Breast epithelium (tissue), 4 donors: ENCODE measurements at regions of chr16 and their contacts with region 1.

Region 1: GRCh38 chr16:24132797-24133155 is 123.4 kb upstream of the CACNG3 start:
- DNase-seq: no peak
- H3K4me3 ChIP-seq: no peak overlapping the region
- H3K27ac ChIP-seq: no peak overlapping the region
- H3K4me1 ChIP-seq: no peaks in the 10 kb centered on the region
- H3K27me3 ChIP-seq: no peaks in the 10 kb centered on the region
- CTCF ChIP-seq: no peak
- POLR2A ChIP-seq: no peak

Region 2: DNA sequence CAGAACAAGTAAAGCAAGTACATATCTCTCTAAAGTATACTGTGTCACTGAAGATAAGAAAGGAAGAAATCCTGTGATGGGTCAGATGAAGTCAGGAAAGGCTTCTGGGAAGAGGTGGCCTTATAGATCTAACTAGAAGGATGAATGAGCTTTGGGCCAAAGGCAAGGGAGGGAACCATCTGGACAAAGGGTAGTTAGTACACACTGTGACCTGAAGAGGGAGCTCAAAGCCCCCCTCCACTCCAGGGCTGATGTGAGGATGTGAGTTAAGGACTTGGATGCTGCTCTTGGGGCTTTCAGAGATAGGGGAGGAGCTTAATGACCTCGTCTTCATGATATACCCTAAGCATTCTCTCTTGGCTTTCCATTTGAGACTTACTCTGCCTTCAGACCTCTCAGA is 61.9 kb before region 1 on chr16:
- intact Hi-C with region 1: no loop called
- DNase-seq: no peak
- H3K4me3 ChIP-seq: no peak overlapping the region
- H3K27ac ChIP-seq: no peak overlapping the region
- H3K4me1 ChIP-seq: no peaks in the 10 kb centered on the region
- H3K27me3 ChIP-seq: no peaks in the 10 kb centered on the region
- CTCF ChIP-seq: no peak
- POLR2A ChIP-seq: no peak

Region 3: DNA sequence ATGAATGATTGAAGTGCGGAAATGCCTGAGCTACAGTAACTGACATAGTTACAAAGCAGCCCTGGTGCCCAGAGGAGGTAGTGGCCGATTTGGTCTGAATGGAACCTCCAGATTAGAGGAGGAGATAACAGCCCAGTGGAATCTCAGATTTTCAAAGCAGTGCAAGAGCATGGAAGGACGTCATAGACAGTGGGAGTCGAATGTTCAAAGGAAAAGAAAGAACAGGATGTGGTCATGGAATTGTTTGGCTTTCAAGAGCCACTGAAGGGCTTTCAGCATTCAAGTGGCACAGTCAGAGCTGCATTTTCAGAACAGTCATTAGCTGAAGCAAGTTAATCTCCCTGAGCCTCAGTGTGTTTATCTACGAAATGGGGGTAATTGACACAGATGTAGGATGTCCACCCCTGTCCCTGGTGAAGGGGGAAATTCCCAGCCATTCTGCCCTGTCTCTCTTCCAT is 18.7 kb after region 1 on chr16:
- intact Hi-C with region 1: loop called (anchors 1 kb)
- DNase-seq: no peak
- H3K4me3 ChIP-seq: no peak overlapping the region
- H3K27ac ChIP-seq: no peak overlapping the region
- H3K4me1 ChIP-seq: no peaks in the 10 kb centered on the region
- H3K27me3 ChIP-seq: no peaks in the 10 kb centered on the region
- CTCF ChIP-seq: no peak
- POLR2A ChIP-seq: no peak